IMR-90 (cell line): ENCODE measurements at regions of chr1 and their contacts with region 1.

Region 1: DNA sequence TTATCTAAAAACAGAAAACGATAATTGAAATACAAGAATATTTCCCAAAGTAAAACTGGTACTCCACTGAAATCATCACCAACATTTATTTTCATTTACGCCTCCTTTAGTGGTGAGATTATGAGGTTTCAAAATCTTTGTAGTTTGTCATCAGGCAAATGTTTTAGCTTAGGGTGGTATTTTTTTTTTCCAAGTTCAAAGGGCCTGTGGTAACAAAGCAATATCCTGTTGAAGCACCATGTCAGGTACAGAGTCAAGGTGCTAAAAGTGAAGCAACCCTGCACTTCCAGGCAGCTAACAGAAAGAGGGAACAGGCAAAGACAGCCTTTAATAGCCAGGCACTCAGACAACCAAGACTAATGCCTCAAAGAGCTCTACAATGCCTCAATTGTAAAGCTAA is 89.2 kb downstream of the JAK1 start:
- DNase-seq: no peak
- ATAC-seq: no peak
- H3K4me3 ChIP-seq: no peak overlapping the region
- H3K27ac ChIP-seq: no peak overlapping the region
- H3K4me1 ChIP-seq: peaks cover 3% of the 10 kb centered on the region
- H3K27me3 ChIP-seq: no peaks in the 10 kb centered on the region
- CTCF ChIP-seq: no peak
- POLR2A ChIP-seq: no peak
- RAD21 ChIP-seq: no peak

Region 2: DNA sequence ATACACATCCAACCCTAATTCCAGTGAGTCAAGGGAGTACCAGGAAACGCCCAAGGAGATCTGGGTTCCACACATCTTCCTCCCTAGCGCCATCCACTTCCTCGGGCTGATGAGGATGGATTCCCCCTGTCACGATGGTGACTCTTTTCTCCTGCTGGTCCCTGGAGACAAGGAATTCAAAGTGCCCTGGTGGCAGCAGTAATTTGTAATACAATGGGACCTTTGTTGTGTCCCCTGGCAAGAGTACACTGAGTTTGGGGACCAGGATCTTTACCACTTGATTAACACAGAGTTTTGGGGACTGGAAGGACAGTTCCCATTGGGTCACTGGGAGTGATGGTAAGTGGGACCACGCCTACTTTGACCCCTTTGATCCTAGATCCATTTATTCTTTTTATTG is 98.6 kb after region 1 on chr1:
- CTCF ChIA-PET with region 1: no interaction called
- POLR2A ChIA-PET with region 1: no interaction called
- dilution Hi-C with region 1: no loop called
- in situ Hi-C with region 1: no loop called
- intact Hi-C with region 1: no loop called
- DNase-seq: no peak
- ATAC-seq: no peak
- H3K4me3 ChIP-seq: no peak overlapping the region
- H3K27ac ChIP-seq: no peak overlapping the region
- H3K4me1 ChIP-seq: no peaks in the 10 kb centered on the region
- H3K27me3 ChIP-seq: no peaks in the 10 kb centered on the region; the same call in 1 of the 2 replicates
- CTCF ChIP-seq: no peak
- POLR2A ChIP-seq: no peak
- RAD21 ChIP-seq: no peak

Region 3: GRCh38 chr1:65009724-65010420 is 132.7 kb after region 1 on chr1:
- CTCF ChIA-PET with region 1: no interaction called
- POLR2A ChIA-PET with region 1: no interaction called
- dilution Hi-C with region 1: no loop called
- in situ Hi-C with region 1: no loop called
- intact Hi-C with region 1: loop called (anchors 5 kb)
- DNase-seq: no peak
- ATAC-seq: no peak
- H3K4me3 ChIP-seq: no peak overlapping the region
- H3K27ac ChIP-seq: no peak overlapping the region
- H3K4me1 ChIP-seq: no peaks in the 10 kb centered on the region
- H3K27me3 ChIP-seq: no peaks in the 10 kb centered on the region
- CTCF ChIP-seq: no peak
- POLR2A ChIP-seq: no peak
- RAD21 ChIP-seq: no peak